ENCODE measurements at regions of chr1 and their contacts with region 1.

Region 1: DNA sequence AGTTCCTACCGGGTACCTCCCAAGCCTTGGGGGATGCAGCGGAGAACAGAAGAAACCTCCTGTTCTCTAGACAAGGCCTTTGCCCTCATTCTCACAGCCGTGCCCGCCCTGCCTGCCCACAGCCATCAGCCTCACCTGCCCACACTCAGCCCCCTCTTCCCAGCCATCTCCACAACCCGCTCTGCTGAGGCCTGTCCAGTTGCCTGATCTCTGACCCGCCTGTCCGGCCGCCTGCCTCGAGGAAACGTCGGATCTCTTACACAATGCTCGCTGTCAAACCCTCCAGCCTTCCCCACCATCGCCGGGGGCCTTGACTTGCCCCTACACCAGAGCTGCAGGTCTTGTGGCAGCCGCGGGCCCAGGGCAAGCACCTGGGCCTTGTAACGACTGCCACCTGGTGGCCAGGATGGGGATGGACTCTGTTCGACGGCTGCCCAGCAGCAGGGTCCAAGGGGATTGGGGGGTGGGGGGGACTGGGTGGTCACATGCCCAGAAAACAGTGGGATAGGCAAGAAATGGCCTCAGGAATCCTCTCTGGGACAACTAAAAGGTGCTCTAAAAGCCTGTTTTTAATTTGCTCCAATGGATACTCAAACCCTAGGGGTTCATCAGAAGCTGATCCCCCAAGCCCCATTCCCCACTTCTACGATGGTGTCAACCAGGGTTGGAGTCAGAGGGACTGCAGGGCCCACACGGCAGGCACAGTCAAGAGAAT is 31.0 kb downstream of the SLC45A1 start:
- DNase-seq: peak; percentile 68
- ATAC-seq: peak; percentile 71
- H3K4me3 ChIP-seq: no peak overlapping the region
- H3K27ac ChIP-seq: no peak overlapping the region
- H3K4me1 ChIP-seq: peaks cover 4% of the 10 kb centered on the region
- H3K27me3 ChIP-seq: no peaks in the 10 kb centered on the region
- CTCF ChIP-seq: peak; percentile 90

Region 2: GRCh38 chr1:8427493-8427892 is 78.6 kb after region 1 on chr1:
- CTCF ChIA-PET with region 1: no interaction called
- POLR2A ChIA-PET with region 1: no interaction called
- intact Hi-C with region 1: no loop called
- DNase-seq: no peak
- ATAC-seq: no peak
- H3K4me3 ChIP-seq: no peak overlapping the region
- H3K27ac ChIP-seq: no peak overlapping the region
- H3K4me1 ChIP-seq: peaks cover 14% of the 10 kb centered on the region
- H3K27me3 ChIP-seq: no peaks in the 10 kb centered on the region
- CTCF ChIP-seq: no peak

Region 3: DNA sequence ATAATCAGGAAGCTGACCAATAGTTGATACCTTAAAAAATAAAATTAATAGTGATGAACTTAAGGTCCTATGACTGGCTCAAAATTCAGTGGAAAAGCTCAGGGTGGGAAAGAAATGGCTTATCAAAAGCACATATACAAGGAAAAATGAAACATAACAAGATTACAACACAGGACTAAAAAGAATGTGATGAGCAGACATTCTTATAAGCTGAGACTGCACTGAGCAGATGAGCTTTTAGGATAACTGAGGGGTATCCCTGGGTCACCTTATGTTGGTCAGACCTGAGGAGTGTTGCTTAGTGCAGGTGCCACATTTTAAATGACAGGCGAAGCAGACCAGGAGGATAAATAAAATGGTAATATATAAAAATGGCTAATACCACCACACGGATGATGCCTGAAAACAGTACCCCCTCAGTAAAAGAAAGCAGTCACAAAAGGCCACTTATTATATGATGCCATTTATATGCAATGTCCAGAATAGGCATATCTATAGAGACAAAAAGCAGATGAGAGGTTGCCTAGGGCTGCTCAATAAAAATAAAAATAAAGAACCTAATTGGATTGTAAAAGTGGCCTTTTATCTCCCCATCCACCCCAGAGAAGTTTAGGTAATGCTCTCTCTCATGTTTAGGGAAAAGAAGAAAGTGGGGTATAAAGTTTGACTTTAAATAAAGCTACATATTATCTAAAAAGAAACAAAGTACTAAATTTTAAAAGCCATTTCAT is 132.9 kb after region 1 on chr1:
- CTCF ChIA-PET with region 1: interaction called, 18 read pairs
- POLR2A ChIA-PET with region 1: no interaction called
- intact Hi-C with region 1: no loop called
- DNase-seq: no peak
- ATAC-seq: no peak
- H3K4me3 ChIP-seq: no peak overlapping the region
- H3K27ac ChIP-seq: no peak overlapping the region
- H3K4me1 ChIP-seq: peaks cover 8% of the 10 kb centered on the region
- H3K27me3 ChIP-seq: no peaks in the 10 kb centered on the region
- CTCF ChIP-seq: no peak